H1 (cell line): ENCODE measurements at regions of chr7 and their contacts with region 1.

Region 1: DNA sequence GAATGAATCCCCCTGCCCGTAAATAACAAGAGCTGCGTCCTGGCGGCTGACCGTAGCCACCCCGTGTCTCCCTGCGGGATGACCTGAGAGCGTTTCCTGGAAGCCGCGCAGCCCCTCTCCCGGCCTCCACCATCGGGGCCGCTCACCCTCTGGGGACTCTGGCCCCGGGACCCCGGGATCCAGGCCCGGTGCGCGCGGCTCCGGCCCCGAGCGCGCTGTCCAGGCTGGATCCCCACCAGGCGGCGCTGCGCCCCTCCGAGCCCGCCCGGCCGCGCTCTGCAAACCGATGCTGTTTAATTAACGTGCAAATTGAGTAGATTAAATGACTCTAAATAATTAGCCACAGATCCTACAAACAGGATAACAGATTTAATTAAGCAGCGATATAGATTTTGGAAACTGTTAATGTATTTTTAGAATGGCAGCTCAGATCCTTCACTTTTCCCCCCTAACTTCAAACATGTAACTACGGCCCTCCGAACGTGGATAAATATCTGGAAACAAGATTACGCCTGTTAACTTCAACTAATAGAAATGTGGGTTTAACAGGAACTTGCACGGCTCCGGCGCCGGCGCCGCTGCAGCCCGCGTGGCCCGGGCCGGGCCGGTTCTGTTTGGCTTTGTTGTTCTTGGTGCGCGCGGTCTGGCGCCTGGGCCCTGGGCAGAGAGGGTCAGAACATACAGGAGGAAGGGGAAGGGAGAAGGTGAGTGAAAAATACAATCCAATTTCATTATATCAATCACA is 7.1 kb upstream of the UNCX start:
- DNase-seq: peak in 1 of 2 experiments; percentile 81
- H3K4me3 ChIP-seq: peak overlapping the region in 1 of 4 experiments; percentile 26; a peak in 1 of 8 replicates
- H3K27ac ChIP-seq: no peak overlapping the region
- H3K4me1 ChIP-seq: peaks cover 0 to 24% (median 20%) of the 10 kb centered on the region in 4 experiments; a peak in 6 of 7 replicates
- H3K27me3 ChIP-seq: peaks cover 57 to 90% (median 78%) of the 10 kb centered on the region in 4 experiments
- CTCF ChIP-seq: peak; percentile 63 to 88 (median 85)
- EP300 ChIP-seq: no peak
- POLR2A ChIP-seq: no peak
- RAD21 ChIP-seq: peak; percentile 64 to 80

Region 2: DNA sequence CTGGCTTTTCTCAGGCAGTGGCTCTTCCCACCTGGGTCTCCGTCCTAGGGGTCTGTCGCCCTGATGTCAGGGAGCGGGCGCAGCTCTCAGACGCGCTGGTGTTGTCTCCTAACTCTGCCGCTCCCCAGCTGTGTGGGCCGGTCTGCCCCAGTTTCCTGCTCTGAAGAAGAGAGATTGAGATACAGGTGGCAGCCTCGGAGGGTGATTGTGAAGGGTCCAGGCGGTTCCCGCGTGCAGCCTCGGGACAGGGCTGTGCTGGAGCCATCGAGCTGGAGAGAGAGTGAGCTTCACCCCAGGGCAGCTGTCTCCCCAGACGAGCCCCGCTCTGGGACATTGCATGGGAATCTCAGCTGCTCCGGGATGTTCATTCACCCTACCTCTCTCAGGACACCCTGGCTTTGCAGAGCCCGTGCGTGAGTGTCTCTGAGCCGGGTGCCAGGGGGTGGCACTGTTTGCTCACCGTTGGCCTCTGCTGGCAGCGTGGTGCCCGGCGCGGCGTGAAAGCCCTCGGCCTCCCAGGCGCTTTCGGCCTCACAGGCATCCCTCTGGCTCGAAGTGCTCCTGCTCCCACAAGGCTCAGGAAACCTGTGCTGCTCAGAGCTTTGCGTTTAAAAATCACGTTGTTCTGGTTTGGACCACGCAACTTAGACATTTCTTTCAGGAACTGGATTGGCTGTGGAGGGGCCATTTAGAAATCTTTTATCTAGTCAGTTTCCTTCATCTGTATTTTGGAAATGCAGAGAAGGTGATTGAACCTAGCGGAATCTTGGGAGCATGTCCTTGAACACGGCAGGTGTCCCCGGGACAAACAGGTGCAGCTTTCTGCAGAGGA is 31.8 kb before region 1 on chr7:
- CTCF ChIA-PET with region 1: interaction called, 10 read pairs
- POLR2A ChIA-PET with region 1: no interaction called
- DNase-seq: peak in 1 of 2 experiments; percentile 78
- H3K4me3 ChIP-seq: no peak overlapping the region
- H3K27ac ChIP-seq: no peak overlapping the region
- H3K4me1 ChIP-seq: no peaks in the 10 kb centered on the region
- H3K27me3 ChIP-seq: no peaks in the 10 kb centered on the region
- CTCF ChIP-seq: peak; percentile 75 to 82 (median 76)
- EP300 ChIP-seq: no peak
- POLR2A ChIP-seq: no peak
- RAD21 ChIP-seq: peak; percentile 88 to 89

Region 3: GRCh38 chr7:1247527-1248059 is 22.0 kb after region 1 on chr7:
- CTCF ChIA-PET with region 1: interaction called, 17 read pairs
- POLR2A ChIA-PET with region 1: interaction called, 76 read pairs
- DNase-seq: no peak
- H3K4me3 ChIP-seq: peak overlapping the region in 1 of 4 experiments; percentile 35; a peak in 2 of 8 replicates
- H3K27ac ChIP-seq: no peak overlapping the region
- H3K4me1 ChIP-seq: peaks cover 4 to 29% (median 21%) of the 10 kb centered on the region in 4 experiments
- H3K27me3 ChIP-seq: peaks cover 72 to 86% (median 84%) of the 10 kb centered on the region in 4 experiments
- CTCF ChIP-seq: no peak
- EP300 ChIP-seq: no peak
- POLR2A ChIP-seq: no peak
- RAD21 ChIP-seq: no peak

Region 4: DNA sequence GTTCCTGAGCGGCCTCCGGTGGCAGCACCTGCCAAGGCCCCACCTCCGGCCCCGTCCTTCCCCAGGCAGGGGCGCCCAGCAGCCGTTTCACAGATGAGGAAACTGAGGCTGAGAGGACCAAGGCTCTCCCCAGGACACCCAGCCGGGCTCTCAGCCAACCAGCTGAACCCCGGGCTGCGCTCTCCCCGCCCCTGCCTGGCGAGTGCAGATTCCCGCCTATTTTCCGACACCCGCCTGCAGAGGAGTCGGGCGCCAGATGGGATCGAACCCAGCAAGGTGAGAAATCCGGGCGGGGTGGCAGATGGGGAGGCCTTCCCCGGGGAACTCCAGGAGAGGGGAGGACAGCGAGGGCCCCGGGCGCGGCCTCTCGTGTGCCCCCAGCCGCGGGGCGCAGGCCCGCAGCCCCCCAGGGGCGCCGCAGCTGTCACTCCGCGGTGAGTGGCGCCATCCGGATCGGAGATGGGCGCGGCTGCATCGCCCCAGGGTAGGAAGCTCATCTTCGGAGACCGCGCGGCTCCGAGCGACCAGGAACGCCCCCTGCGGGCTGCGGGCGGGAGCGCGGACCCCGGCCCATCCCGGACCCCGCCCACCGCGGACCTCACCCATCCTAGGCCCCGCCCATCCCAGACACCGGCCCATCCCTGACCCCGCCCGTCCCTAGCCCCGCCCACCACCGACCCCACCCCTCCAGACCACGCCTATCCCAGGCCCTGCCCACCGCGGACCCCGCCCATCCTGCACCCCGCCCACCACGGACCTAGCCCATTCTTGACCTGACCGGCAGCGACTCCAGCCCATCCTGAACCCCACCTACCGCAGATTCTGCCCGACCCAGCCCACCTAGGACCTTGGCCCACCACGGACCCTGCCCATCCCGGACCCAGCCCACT is 143.3 kb after region 1 on chr7:
- CTCF ChIA-PET with region 1: interaction called, 11 read pairs
- POLR2A ChIA-PET with region 1: no interaction called
- DNase-seq: peak; percentile 81 to 99
- H3K4me3 ChIP-seq: peak overlapping the region in 3 of 4 experiments; percentile 26 to 54 (median 27); a peak in 6 of 8 replicates
- H3K27ac ChIP-seq: no peak overlapping the region
- H3K4me1 ChIP-seq: peaks cover 0 to 13% (median 7%) of the 10 kb centered on the region in 4 experiments; a peak in 5 of 7 replicates
- H3K27me3 ChIP-seq: peaks cover 0 to 25% (median 17%) of the 10 kb centered on the region in 4 experiments; a peak in 5 of 7 replicates
- CTCF ChIP-seq: peak in 2 of 3 experiments; percentile 66 to 68; a peak in 3 of 4 replicates
- EP300 ChIP-seq: no peak
- POLR2A ChIP-seq: no peak
- RAD21 ChIP-seq: peak; percentile 65 to 71

Region 5: GRCh38 chr7:1403638-1404459 is 178.2 kb after region 1 on chr7:
- CTCF ChIA-PET with region 1: interaction called, 20 read pairs
- POLR2A ChIA-PET with region 1: no interaction called
- DNase-seq: no peak
- H3K4me3 ChIP-seq: peak overlapping the region; percentile 0 to 57 (median 30); a peak in 7 of 8 replicates
- H3K27ac ChIP-seq: no peak overlapping the region
- H3K4me1 ChIP-seq: peaks cover 0 to 6% (median 2%) of the 10 kb centered on the region in 4 experiments; a peak in 4 of 7 replicates
- H3K27me3 ChIP-seq: peaks cover 0 to 25% (median 14%) of the 10 kb centered on the region in 4 experiments; a peak in 5 of 7 replicates
- CTCF ChIP-seq: no peak
- EP300 ChIP-seq: no peak
- POLR2A ChIP-seq: no peak
- RAD21 ChIP-seq: no peak

Region 6: DNA sequence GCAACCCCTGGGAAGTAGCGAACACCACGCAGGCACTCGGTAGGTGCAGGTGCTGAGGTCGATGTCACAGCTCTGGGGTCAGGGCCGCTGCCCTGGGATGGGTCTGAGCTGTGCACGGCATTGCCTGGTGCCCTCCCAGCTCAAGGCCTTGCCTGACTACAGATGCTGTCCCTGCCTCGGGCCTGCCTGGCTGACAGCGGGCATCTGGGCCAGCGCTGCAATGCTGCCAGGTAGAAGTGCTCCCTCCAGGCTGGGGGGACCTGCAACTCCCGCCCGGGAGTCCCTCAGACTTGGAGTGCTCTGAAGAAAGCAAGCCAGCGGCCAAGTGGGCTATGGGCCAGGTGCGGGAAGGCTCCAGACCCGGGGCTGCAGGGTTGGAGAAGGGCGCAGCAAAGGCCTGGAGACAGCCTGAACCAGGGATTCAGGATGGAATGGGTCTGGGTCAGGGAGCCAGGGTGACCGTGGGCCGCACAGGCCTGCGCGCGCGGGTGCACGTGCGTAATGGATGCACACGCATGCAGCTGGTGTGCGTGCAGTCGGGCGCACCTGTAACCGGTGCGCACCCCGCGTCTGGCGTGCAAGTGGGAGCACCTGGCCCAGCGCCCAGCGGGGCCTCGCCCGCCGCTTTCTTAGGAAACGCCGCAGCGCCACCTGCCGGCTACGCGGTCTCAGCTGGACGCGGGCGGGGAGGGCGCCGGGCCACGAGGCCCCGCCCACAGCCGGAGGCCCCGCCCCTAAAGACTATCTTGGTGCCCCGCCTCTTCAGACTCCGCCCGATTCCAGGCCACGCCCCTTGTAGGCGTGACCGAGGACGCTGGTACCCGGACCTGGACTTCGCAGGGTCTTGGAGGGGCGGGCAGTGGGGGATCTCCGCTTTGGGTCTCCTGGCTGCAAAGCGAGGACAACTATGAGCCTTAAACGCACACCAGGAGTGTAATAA is 187.0 kb after region 1 on chr7:
- CTCF ChIA-PET with region 1: interaction called, 30 read pairs
- POLR2A ChIA-PET with region 1: interaction called, 3 read pairs
- DNase-seq: peak; percentile 70 to 99
- H3K4me3 ChIP-seq: peak overlapping the region in 3 of 4 experiments; percentile 14 to 42 (median 23); a peak in 5 of 8 replicates
- H3K27ac ChIP-seq: no peak overlapping the region
- H3K4me1 ChIP-seq: peaks cover 0 to 3% (median 1%) of the 10 kb centered on the region in 4 experiments; a peak in 4 of 7 replicates
- H3K27me3 ChIP-seq: peaks cover 0 to 9% (median 8%) of the 10 kb centered on the region in 4 experiments; a peak in 4 of 7 replicates
- CTCF ChIP-seq: peak in 2 of 3 experiments; percentile 83 to 86; a peak in 3 of 4 replicates
- EP300 ChIP-seq: no peak; a peak in 1 of 3 replicates
- POLR2A ChIP-seq: no peak
- RAD21 ChIP-seq: peak; percentile 87 to 90

Region 7: DNA sequence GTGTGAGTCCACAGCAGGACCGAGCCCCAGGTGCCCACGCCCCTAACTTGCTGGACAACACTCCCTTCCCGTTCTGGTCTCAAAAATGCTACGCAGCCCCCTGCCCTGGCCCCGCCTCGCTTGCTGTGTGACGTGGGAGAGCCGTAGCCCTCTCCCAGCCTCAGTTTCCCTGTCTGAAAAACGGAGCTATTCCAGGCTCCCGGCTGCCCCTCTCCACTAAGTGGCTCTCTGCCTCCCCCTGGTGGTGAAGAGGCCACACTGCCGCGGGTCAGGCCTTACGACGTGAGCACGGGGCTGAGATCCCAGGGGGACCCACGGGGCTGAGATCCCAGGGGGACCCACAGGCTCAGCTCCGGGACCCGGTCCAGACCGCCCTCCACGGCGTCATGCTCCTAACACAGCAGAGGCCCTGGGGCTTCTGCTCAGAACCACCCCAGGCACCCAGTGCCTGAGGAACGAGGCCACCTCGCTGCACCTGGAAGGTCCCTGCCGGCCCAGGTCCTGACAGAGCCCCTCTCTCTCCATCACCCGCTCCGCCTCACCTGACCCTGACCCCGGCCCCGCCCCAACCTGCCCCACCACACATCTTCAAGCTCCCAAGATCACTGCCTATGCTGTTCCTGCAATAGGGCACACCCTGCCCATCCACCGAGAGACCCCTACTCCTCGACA is 206.9 kb after region 1 on chr7:
- CTCF ChIA-PET with region 1: interaction called, 62 read pairs
- POLR2A ChIA-PET with region 1: no interaction called
- DNase-seq: peak in 1 of 2 experiments; percentile 97
- H3K4me3 ChIP-seq: peak overlapping the region in 1 of 4 experiments; percentile 41; a peak in 1 of 8 replicates
- H3K27ac ChIP-seq: no peak overlapping the region
- H3K4me1 ChIP-seq: peaks cover 0 to 10% (median 5%) of the 10 kb centered on the region in 4 experiments; a peak in 5 of 7 replicates
- H3K27me3 ChIP-seq: no peaks in the 10 kb centered on the region
- CTCF ChIP-seq: peak in 2 of 3 experiments; percentile 93 to 95; a peak in 3 of 4 replicates
- EP300 ChIP-seq: no peak
- POLR2A ChIP-seq: no peak
- RAD21 ChIP-seq: peak; percentile 80 to 91